ENCODE measurements at regions of chr2 and their contacts with region 1.

Region 1: GRCh38 chr2:10434886-10435819 is 13.0 kb downstream of the ODC1 start:
- DNase-seq: peak; percentile 41
- H3K4me3 ChIP-seq: no peak overlapping the region
- H3K27ac ChIP-seq: no peak overlapping the region
- H3K4me1 ChIP-seq: peaks cover 4% of the 10 kb centered on the region
- H3K27me3 ChIP-seq: no peaks in the 10 kb centered on the region
- CTCF ChIP-seq: peak; percentile 89 to 96

Region 2: GRCh38 chr2:9770308-9771100 is 664.6 kb before region 1 on chr2:
- CTCF ChIA-PET with region 1: no interaction called
- dilution Hi-C with region 1: no loop called
- in situ Hi-C with region 1: no loop called
- intact Hi-C with region 1: loop called (anchors 1 kb)
- DNase-seq: peak; percentile 73
- H3K4me3 ChIP-seq: no peak overlapping the region
- H3K27ac ChIP-seq: peak overlapping the region; percentile 27
- H3K4me1 ChIP-seq: peaks cover 44% of the 10 kb centered on the region
- H3K27me3 ChIP-seq: no peaks in the 10 kb centered on the region
- CTCF ChIP-seq: peak; percentile 68 to 78

Region 3: DNA sequence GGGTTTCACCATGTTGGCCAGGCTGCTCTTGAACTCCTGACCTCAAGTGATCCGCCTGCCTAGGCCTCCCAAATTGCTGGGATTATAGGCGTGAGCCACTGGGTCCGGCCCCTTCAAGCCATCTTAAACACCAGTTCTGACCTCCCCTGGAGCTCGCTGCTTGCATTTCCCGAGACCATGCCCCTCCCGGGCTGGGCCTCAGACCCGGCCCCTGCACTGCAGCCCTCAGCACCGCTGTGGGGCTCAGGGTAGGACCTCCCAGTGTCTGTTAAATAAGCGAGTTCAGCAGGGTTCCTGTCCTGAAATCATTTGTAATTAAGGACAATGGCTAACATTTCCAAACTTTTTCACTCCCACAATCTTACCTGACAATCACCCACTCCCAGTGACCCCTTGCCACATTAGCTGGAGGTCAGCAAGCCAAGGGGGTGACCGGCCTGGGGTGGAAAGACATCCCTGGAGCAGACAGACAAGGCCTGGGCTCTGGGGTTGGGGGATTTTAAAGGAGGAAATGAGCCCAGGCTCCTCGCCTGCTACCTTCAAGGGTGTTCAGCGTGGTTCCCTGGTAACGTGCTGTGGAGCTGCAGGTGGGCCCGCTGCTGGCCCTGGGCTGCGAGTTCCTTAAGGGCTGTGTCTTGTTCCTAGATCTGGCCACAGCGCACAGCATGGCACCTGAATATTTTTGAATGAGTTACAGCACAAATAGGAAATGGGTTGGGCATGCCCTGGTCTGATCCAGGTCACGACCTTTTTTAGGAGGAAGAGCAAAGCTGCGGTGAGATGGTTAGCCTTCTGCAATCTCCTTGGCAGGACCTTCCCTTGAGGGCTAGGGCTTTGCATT is 370.0 kb before region 1 on chr2:
- CTCF ChIA-PET with region 1: no interaction called
- dilution Hi-C with region 1: no loop called
- in situ Hi-C with region 1: loop called (anchors 5 to 10 kb)
- intact Hi-C with region 1: no loop called
- DNase-seq: no peak
- H3K4me3 ChIP-seq: no peak overlapping the region
- H3K27ac ChIP-seq: no peak overlapping the region
- H3K4me1 ChIP-seq: no peaks in the 10 kb centered on the region
- H3K27me3 ChIP-seq: no peaks in the 10 kb centered on the region
- CTCF ChIP-seq: no peak

Region 4: DNA sequence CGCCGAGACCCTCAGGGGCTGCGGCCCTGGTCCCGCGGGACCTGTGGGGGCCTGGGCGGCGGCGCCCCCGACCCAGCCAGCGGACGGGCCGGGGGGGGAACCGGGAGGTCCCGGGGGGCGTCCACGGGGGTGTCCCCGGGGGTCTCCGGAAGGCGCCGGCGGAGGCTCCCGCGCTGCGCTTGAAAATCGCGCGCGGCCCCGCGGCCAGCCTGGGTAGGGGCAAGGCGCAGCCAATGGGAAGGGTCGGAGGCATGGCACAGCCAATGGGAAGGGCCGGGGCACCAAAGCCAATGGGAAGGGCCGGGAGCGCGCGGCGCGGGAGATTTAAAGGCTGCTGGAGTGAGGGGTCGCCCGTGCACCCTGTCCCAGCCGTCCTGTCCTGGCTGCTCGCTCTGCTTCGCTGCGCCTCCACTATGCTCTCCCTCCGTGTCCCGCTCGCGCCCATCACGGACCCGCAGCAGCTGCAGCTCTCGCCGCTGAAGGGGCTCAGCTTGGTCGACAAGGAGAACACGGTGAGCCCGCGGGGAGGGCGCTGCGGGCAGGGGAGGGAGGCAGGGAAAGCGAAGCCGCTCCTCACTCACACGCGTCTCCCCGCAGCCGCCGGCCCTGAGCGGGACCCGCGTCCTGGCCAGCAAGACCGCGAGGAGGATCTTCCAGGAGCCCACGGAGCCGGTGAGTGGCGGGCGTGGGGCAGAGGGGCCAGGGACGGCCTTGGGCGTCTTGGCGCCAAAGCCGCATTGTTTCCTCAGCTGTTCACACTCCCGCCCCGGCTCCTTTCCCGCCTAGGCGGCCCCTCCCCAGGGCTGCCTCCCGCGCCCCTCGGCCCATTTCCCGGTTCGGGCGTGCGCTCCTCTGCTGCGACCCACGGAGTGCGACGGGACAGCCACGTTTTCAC is 312.5 kb before region 1 on chr2 and contains the start of gene RRM2:
- CTCF ChIA-PET with region 1: interaction called, 10 read pairs
- dilution Hi-C with region 1: loop called (anchors 5 kb)
- in situ Hi-C with region 1: no loop called
- intact Hi-C with region 1: loop called (anchors 1 kb)
- DNase-seq: peak; percentile 88
- H3K4me3 ChIP-seq: peak within 1 kb of the TSS; percentile 43 to 93 (median 88)
- H3K27ac ChIP-seq: peak within 1 kb of the TSS; percentile 75
- H3K4me1 ChIP-seq: peaks cover 35% of the 10 kb centered on the region
- H3K27me3 ChIP-seq: no peaks in the 10 kb centered on the region
- CTCF ChIP-seq: no peak
- total RNA-seq, gene RRM2: 4.0 to 103 TPM

Region 5: GRCh38 chr2:10171006-10171800 is 263.9 kb before region 1 on chr2:
- CTCF ChIA-PET with region 1: interaction called, 15 read pairs
- dilution Hi-C with region 1: no loop called
- in situ Hi-C with region 1: no loop called
- intact Hi-C with region 1: no loop called
- DNase-seq: no peak
- H3K4me3 ChIP-seq: no peak overlapping the region
- H3K27ac ChIP-seq: no peak overlapping the region
- H3K4me1 ChIP-seq: peaks cover 12% of the 10 kb centered on the region
- H3K27me3 ChIP-seq: no peaks in the 10 kb centered on the region
- CTCF ChIP-seq: no peak

Region 6: DNA sequence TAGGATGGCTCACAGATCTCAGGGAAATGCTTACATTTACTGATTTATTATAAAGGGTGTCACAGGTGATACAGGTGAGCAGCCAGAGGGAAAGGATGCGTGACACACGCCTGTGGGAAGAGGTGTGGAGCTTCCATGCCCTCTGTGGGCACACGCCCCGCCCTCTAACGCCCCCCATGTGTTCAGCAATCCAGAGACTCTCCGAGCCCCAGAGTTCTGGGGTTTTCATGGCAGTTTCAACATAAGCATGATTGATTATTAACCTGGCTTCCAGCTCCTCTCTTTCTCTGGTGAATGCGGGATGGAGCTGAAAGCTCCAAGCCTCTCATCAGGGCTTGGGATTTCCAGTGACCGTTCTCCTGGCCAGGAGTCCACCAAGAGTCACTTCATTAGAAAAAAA is 47.3 kb after region 1 on chr2:
- CTCF ChIA-PET with region 1: no interaction called
- dilution Hi-C with region 1: no loop called
- in situ Hi-C with region 1: no loop called
- intact Hi-C with region 1: no loop called
- DNase-seq: no peak
- H3K4me3 ChIP-seq: no peak overlapping the region
- H3K27ac ChIP-seq: no peak overlapping the region
- H3K4me1 ChIP-seq: no peaks in the 10 kb centered on the region
- H3K27me3 ChIP-seq: peaks cover 7% of the 10 kb centered on the region
- CTCF ChIP-seq: no peak

Region 7: GRCh38 chr2:10493636-10494281 is 58.6 kb after region 1 on chr2:
- CTCF ChIA-PET with region 1: no interaction called
- dilution Hi-C with region 1: no loop called
- in situ Hi-C with region 1: no loop called
- intact Hi-C with region 1: no loop called
- DNase-seq: peak; percentile 99
- H3K4me3 ChIP-seq: no peak overlapping the region
- H3K27ac ChIP-seq: peak overlapping the region; percentile 91
- H3K4me1 ChIP-seq: peaks cover 37% of the 10 kb centered on the region
- H3K27me3 ChIP-seq: no peaks in the 10 kb centered on the region
- CTCF ChIP-seq: no peak

Region 8: GRCh38 chr2:10668402-10669012 is 233.4 kb after region 1 on chr2:
- CTCF ChIA-PET with region 1: no interaction called
- dilution Hi-C with region 1: no loop called
- in situ Hi-C with region 1: loop called in 1 of 2 experiments (anchors 10 kb)
- intact Hi-C with region 1: loop called (anchors 2 kb)
- DNase-seq: peak; percentile 39
- H3K4me3 ChIP-seq: no peak overlapping the region
- H3K27ac ChIP-seq: no peak overlapping the region
- H3K4me1 ChIP-seq: no peaks in the 10 kb centered on the region
- H3K27me3 ChIP-seq: no peaks in the 10 kb centered on the region
- CTCF ChIP-seq: peak; percentile 61 to 68

Measured in mammary epithelial cell (primary cell).